ENCODE measurements at regions of chr18 and their contacts with region 1.

Region 1: GRCh38 chr18:59846814-59847490 is 52.8 kb upstream of the PMAIP1 start:
- DNase-seq: peak; percentile 83
- ATAC-seq: peak; percentile 93
- H3K4me3 ChIP-seq: peak overlapping the region; percentile 8; the same call in 1 of the 2 replicates
- H3K27ac ChIP-seq: peak overlapping the region; percentile 82
- H3K4me1 ChIP-seq: peaks cover 24% of the 10 kb centered on the region
- H3K27me3 ChIP-seq: no peaks in the 10 kb centered on the region
- CTCF ChIP-seq: no peak
- EP300 ChIP-seq: peak in 1 of 2 experiments; percentile 37; a peak in 1 of 4 replicates
- POLR2A ChIP-seq: no peak
- RAD21 ChIP-seq: peak; percentile 26; the same call in 1 of the 2 replicates

Region 2: DNA sequence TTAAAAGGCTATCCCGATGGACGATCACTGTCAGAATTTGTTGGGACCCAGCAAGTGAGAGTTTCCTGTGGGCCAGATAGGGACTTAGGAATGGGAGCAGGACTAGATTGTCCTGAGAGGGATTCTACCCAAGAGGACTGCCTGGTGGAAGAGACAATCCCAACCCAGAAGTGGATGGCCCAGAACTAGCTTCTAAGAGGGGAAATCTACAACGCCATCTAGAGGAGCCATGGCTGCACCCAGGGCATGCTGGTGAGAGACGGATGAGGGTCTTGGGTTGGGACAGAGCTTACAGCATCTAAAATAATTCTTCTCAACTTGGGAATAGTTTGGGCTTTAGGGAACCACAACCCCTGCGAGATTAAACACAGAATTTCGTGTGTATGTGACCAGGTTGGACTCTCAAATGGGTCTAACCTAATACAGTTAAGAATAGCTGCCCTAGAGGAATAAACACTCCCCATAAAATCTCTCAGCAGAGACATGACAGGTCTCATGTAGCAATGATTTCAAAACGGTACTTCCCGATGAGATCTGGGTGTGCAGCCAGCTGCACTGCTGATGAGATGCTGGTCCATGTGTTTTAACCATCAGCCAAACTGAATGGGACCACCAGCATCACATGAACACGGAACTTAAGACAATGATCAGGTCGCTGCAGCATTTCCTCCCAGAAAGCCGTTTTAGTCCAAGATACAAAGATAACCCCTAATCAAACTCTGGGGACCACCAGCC is 200.6 kb before region 1 on chr18:
- CTCF ChIA-PET with region 1: no interaction called
- POLR2A ChIA-PET with region 1: no interaction called
- RAD21 ChIA-PET with region 1: no interaction called
- SMC1A ChIA-PET with region 1: no interaction called
- in situ Hi-C with region 1: no loop called
- intact Hi-C with region 1: no loop called
- DNase-seq: no peak
- ATAC-seq: no peak
- H3K4me3 ChIP-seq: no peak overlapping the region
- H3K27ac ChIP-seq: no peak overlapping the region
- H3K4me1 ChIP-seq: no peaks in the 10 kb centered on the region
- H3K27me3 ChIP-seq: no peaks in the 10 kb centered on the region; a peak in 2 of 4 replicates
- CTCF ChIP-seq: peak in 1 of 3 experiments; percentile 19; a peak in 2 of 6 replicates
- EP300 ChIP-seq: no peak
- POLR2A ChIP-seq: no peak
- RAD21 ChIP-seq: no peak

Region 3: GRCh38 chr18:59681521-59682004 is 165.4 kb before region 1 on chr18:
- CTCF ChIA-PET with region 1: no interaction called
- POLR2A ChIA-PET with region 1: no interaction called
- RAD21 ChIA-PET with region 1: no interaction called
- SMC1A ChIA-PET with region 1: no interaction called
- in situ Hi-C with region 1: no loop called
- intact Hi-C with region 1: no loop called
- DNase-seq: no peak
- ATAC-seq: no peak
- H3K4me3 ChIP-seq: no peak overlapping the region
- H3K27ac ChIP-seq: no peak overlapping the region
- H3K4me1 ChIP-seq: no peaks in the 10 kb centered on the region
- H3K27me3 ChIP-seq: no peaks in the 10 kb centered on the region; a peak in 2 of 4 replicates
- CTCF ChIP-seq: no peak
- EP300 ChIP-seq: no peak
- POLR2A ChIP-seq: no peak
- RAD21 ChIP-seq: no peak

Region 4: DNA sequence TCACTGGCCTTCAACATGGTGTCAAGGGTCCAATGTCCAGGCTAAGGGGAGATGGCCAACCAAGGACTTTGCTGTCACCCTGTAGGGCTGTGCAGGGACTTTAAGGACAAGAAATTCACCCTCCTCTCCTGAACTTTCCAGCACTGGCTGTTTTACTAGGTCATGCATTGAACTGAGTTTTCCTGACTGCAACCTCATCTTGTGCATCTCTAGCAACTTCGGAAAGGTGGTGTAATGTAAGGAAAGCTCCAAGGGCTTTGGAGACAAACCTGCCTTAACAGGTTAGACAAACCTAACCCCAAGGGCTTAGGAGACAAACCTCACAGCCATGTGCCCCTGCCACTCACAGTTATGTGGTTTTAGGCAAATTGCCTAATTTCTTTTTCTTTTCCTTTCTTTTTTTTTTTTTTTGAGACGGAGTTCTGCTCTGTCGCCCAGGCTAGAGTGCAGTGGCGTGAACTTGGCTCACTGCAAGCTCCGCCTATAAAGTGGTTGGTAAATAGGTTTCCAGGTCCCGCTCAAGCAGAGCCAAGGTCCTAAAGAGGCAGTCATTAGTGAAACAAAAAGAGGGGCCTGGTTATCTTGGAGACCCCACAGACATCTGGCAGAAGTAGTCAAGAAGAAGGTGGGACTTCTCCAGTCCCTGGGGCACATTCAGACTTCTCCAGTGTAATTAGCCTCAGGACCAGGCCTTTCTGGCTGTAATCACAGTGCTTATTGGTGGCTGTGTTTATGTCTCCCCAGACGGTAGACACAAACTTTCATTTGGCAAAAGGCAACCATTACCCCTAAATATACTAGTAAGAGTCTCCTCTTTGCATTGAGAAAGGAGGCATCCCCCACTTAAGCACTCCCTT is 15.2 kb after region 1 on chr18:
- CTCF ChIA-PET with region 1: interaction called, 7 read pairs
- POLR2A ChIA-PET with region 1: interaction called, 3 read pairs
- RAD21 ChIA-PET with region 1: interaction called, 5 read pairs
- SMC1A ChIA-PET with region 1: interaction called, 13 read pairs
- in situ Hi-C with region 1: no loop called
- intact Hi-C with region 1: no loop called
- DNase-seq: peak; percentile 61
- ATAC-seq: peak; percentile 94
- H3K4me3 ChIP-seq: no peak overlapping the region
- H3K27ac ChIP-seq: peak overlapping the region; percentile 71
- H3K4me1 ChIP-seq: peaks cover 16% of the 10 kb centered on the region
- H3K27me3 ChIP-seq: no peaks in the 10 kb centered on the region
- CTCF ChIP-seq: no peak
- EP300 ChIP-seq: no peak
- POLR2A ChIP-seq: no peak
- RAD21 ChIP-seq: no peak

Region 5: GRCh38 chr18:59876310-59876626 is 29.3 kb after region 1 on chr18:
- CTCF ChIA-PET with region 1: interaction called, 4 read pairs
- POLR2A ChIA-PET with region 1: interaction called, 6 read pairs
- RAD21 ChIA-PET with region 1: interaction called, 12 read pairs
- SMC1A ChIA-PET with region 1: interaction called, 18 read pairs
- in situ Hi-C with region 1: no loop called
- intact Hi-C with region 1: loop called (anchors 1 kb)
- DNase-seq: peak; percentile 86
- ATAC-seq: peak; percentile 79
- H3K4me3 ChIP-seq: peak overlapping the region; percentile 56; the same call in 1 of the 2 replicates
- H3K27ac ChIP-seq: peak overlapping the region; percentile 87
- H3K4me1 ChIP-seq: peaks cover 59% of the 10 kb centered on the region
- H3K27me3 ChIP-seq: no peaks in the 10 kb centered on the region
- CTCF ChIP-seq: no peak
- EP300 ChIP-seq: peak in 1 of 2 experiments; percentile 77; a peak in 3 of 4 replicates
- POLR2A ChIP-seq: no peak
- RAD21 ChIP-seq: no peak

Region 6: GRCh38 chr18:59885579-59886163 is 38.7 kb after region 1 on chr18:
- CTCF ChIA-PET with region 1: interaction called, 5 read pairs
- POLR2A ChIA-PET with region 1: interaction called, 7 read pairs
- RAD21 ChIA-PET with region 1: interaction called, 12 read pairs
- SMC1A ChIA-PET with region 1: interaction called, 13 read pairs
- in situ Hi-C with region 1: no loop called
- intact Hi-C with region 1: no loop called
- DNase-seq: peak; percentile 78
- ATAC-seq: peak; percentile 86
- H3K4me3 ChIP-seq: peak overlapping the region; percentile 63
- H3K27ac ChIP-seq: peak overlapping the region; percentile 91
- H3K4me1 ChIP-seq: peaks cover 38% of the 10 kb centered on the region
- H3K27me3 ChIP-seq: no peaks in the 10 kb centered on the region
- CTCF ChIP-seq: no peak
- EP300 ChIP-seq: peak; percentile 88 to 95
- POLR2A ChIP-seq: no peak
- RAD21 ChIP-seq: 0 out of 2 replicates have a peak, but pooled peaks have one; percentile 4

Region 7: GRCh38 chr18:60130284-60130683 is 283.3 kb after region 1 on chr18:
- CTCF ChIA-PET with region 1: no interaction called
- POLR2A ChIA-PET with region 1: no interaction called
- RAD21 ChIA-PET with region 1: no interaction called
- SMC1A ChIA-PET with region 1: no interaction called
- in situ Hi-C with region 1: no loop called
- intact Hi-C with region 1: no loop called
- DNase-seq: no peak
- ATAC-seq: no peak
- H3K4me3 ChIP-seq: no peak overlapping the region
- H3K27ac ChIP-seq: no peak overlapping the region
- H3K4me1 ChIP-seq: no peaks in the 10 kb centered on the region
- H3K27me3 ChIP-seq: no peaks in the 10 kb centered on the region
- CTCF ChIP-seq: no peak
- EP300 ChIP-seq: no peak
- POLR2A ChIP-seq: no peak
- RAD21 ChIP-seq: no peak